ENCODE measurements at regions of chr17 and their contacts with region 1.

Region 1: GRCh38 chr17:39952680-39953470 is 9.9 kb upstream of the GSDMA start:
- DNase-seq: peak; percentile 83 to 99 (median 95)
- ATAC-seq: peak; percentile 84 to 89 (median 86)
- H3K4me3 ChIP-seq: peak overlapping the region; percentile 56 to 64
- H3K4me3 Mint-ChIP-seq: peak overlapping the region; percentile 73 to 83 (median 80)
- H3K27ac ChIP-seq: peak overlapping the region; percentile 45
- H3K27ac Mint-ChIP-seq: peak overlapping the region; percentile 76 to 80
- H3K4me1 ChIP-seq: peaks cover 2 to 33% of the 10 kb centered on the region in 2 experiments
- H3K4me1 Mint-ChIP-seq: peaks cover 18 to 28% (median 23%) of the 10 kb centered on the region in 3 donors
- H3K27me3 ChIP-seq: no peaks in the 10 kb centered on the region
- H3K27me3 Mint-ChIP-seq: no peaks in the 10 kb centered on the region

Region 2: DNA sequence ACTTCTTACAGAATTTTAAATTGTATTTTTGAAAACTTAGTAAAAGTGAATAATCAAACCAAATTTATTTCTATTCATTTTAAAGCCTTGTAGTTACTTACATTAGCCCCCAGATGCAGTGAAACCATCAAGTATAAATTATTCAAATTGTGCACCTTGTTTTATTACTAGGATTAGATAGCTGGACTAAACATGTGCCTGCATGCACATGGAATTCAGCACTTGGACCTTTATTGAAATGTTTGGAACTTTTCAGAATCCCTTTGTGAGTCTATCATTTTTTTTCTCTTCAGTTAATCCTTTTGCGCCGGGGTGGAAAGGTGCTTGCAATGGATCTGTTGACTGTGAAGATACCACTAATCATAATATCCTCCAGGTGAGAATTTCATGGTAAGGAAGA is 80.1 kb before region 1 on chr17:
- CTCF ChIA-PET with region 1: no interaction called
- POLR2A ChIA-PET with region 1: interaction called in 1 of 2 experiments, 10 read pairs
- DNase-seq: peak in 1 of 35 experiments; percentile 44
- ATAC-seq: peak in 1 of 4 experiments; percentile 50
- H3K4me3 ChIP-seq: no peak overlapping the region
- H3K4me3 Mint-ChIP-seq: no peak overlapping the region
- H3K27ac ChIP-seq: no peak overlapping the region
- H3K27ac Mint-ChIP-seq: no peak overlapping the region
- H3K4me1 ChIP-seq: peaks cover 0 to 10% of the 10 kb centered on the region in 2 experiments
- H3K4me1 Mint-ChIP-seq: peaks cover under 1 to 12% (median 10%) of the 10 kb centered on the region in 3 donors
- H3K27me3 ChIP-seq: no peaks in the 10 kb centered on the region
- H3K27me3 Mint-ChIP-seq: no peaks in the 10 kb centered on the region

Region 3: DNA sequence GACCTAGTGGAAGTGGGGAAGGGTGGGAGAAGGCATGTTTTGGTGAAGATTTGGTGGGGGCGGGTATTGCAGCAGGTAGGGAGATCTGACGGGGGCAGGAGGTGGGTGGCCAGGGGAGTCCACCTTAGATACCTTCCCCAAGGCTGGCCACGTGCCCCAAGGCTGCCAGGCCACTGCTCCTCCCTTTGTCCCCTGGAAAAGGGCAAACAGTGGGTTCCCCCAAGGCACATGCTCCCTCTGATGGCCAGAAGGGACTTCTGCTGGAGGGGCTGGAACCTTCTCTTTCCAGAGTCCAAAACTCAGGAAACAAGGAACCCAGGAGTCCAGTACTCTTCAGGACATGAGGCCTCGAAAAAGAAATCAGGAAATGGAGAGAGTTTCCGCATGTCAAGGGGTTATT is 21.6 kb after region 1 on chr17:
- CTCF ChIA-PET with region 1: interaction called, 4 to 18 read pairs
- POLR2A ChIA-PET with region 1: interaction called in 1 of 2 experiments, 11 read pairs
- DNase-seq: no peak
- ATAC-seq: no peak
- H3K4me3 ChIP-seq: no peak overlapping the region
- H3K4me3 Mint-ChIP-seq: no peak overlapping the region
- H3K27ac ChIP-seq: no peak overlapping the region
- H3K27ac Mint-ChIP-seq: no peak overlapping the region
- H3K4me1 ChIP-seq: no peaks in the 10 kb centered on the region
- H3K4me1 Mint-ChIP-seq: peaks cover 0 to 3% (median 3%) of the 10 kb centered on the region in 3 donors
- H3K27me3 ChIP-seq: peaks cover 0 to 20% of the 10 kb centered on the region in 2 experiments
- H3K27me3 Mint-ChIP-seq: peaks cover 22 to 23% of the 10 kb centered on the region in 2 donors

Region 4: DNA sequence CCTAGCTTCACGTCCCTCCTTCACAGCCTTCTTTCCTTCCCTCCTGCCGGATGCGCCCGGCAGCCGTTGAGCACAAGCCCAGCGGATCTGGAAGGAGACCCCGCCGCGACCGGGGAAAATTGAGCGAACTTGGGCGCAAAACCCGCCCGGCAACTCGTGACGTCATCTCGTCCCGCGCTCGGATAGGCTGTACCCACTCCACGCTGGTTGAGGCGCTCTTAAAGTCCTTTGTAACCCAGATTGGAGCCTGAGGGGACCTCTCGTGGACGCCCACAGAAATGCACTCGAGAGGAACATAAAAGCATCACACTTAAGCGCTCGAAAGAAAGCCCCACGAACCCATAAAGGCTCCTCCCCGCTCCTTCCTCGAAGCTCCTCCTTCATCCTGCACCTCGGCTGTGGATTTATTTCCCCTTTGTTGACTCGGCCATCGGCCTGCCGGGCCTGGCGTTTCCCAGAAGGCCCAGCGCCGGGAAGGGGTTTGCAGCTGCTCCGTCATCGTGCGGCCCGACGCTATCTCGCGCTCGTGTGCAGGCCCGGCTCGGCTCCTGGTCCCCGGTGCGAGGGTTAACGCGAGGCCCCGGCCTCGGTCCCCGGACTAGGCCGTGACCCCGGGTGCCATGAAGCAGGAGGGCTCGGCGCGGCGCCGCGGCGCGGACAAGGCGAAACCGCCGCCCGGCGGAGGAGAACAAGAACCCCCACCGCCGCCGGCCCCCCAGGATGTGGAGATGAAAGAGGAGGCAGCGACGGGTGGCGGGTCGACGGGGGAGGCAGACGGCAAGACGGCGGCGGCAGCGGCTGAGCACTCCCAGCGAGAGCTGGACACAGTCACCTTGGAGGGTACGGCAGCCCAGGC is 27.7 kb after region 1 on chr17 and contains the start of gene PSMD3:
- CTCF ChIA-PET with region 1: interaction called, 4 to 29 read pairs
- POLR2A ChIA-PET with region 1: interaction called in 1 of 2 experiments, 5 read pairs
- DNase-seq: peak; percentile 94 to 100 (median 98)
- ATAC-seq: peak; percentile 93 to 94 (median 94)
- H3K4me3 ChIP-seq: peak within 1 kb of the TSS; percentile 85 to 96
- H3K4me3 Mint-ChIP-seq: peak within 1 kb of the TSS; percentile 88 to 93 (median 91)
- H3K27ac ChIP-seq: peak within 1 kb of the TSS; percentile 94
- H3K27ac Mint-ChIP-seq: peak within 1 kb of the TSS; percentile 93 to 97
- H3K4me1 ChIP-seq: peaks cover 13 to 20% of the 10 kb centered on the region in 2 experiments
- H3K4me1 Mint-ChIP-seq: peaks cover 39 to 44% (median 43%) of the 10 kb centered on the region in 3 donors
- H3K27me3 ChIP-seq: peaks cover 0 to 7% of the 10 kb centered on the region in 2 experiments
- H3K27me3 Mint-ChIP-seq: no peaks in the 10 kb centered on the region
- total RNA-seq, gene PSMD3: 60.8 to 69.0 (median 63.5) TPM

Region 5: DNA sequence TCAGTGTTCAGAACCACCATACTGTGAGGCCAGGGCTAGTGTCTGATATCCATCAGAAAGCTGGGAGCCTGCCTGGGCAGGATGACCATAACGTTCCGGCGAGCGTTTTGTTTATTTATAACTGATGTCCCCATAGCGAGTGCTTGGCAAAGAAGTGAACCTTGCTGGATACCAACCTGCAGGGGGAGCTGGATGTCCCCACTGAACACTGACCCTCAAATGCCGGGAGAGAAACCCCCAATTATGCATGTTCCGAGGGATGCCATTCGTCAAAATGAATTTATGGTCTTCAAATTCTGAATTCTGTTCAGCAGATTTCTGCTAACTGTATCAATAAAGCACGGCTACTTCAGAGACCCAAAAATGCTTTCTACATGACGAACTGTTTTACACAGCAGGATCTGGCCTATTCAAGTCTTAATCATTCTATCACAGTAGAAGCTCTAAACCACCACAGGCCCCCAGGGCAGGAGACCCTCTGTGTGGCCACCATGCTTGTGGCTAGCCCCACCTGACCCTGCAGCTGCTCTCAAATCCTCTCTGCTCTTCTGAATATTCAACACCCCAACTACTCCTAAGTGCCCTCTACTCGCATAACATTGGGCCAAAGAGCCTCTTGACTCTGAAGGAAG is 86.1 kb after region 1 on chr17:
- CTCF ChIA-PET with region 1: no interaction called
- POLR2A ChIA-PET with region 1: no interaction called
- DNase-seq: peak in 1 of 35 experiments; percentile 34
- ATAC-seq: no peak
- H3K4me3 ChIP-seq: no peak overlapping the region
- H3K4me3 Mint-ChIP-seq: no peak overlapping the region
- H3K27ac ChIP-seq: no peak overlapping the region
- H3K27ac Mint-ChIP-seq: peak overlapping the region in 1 of 2 donors; percentile 22
- H3K4me1 ChIP-seq: no peaks in the 10 kb centered on the region
- H3K4me1 Mint-ChIP-seq: peaks cover 0 to 7% (median 0%) of the 10 kb centered on the region in 3 donors
- H3K27me3 ChIP-seq: no peaks in the 10 kb centered on the region
- H3K27me3 Mint-ChIP-seq: no peaks in the 10 kb centered on the region

Measured in T-cell (primary cell).